Mucosa of descending colon (tissue), 3 donors: ENCODE measurements at regions of chr2 and their contacts with region 1.

Region 1: DNA sequence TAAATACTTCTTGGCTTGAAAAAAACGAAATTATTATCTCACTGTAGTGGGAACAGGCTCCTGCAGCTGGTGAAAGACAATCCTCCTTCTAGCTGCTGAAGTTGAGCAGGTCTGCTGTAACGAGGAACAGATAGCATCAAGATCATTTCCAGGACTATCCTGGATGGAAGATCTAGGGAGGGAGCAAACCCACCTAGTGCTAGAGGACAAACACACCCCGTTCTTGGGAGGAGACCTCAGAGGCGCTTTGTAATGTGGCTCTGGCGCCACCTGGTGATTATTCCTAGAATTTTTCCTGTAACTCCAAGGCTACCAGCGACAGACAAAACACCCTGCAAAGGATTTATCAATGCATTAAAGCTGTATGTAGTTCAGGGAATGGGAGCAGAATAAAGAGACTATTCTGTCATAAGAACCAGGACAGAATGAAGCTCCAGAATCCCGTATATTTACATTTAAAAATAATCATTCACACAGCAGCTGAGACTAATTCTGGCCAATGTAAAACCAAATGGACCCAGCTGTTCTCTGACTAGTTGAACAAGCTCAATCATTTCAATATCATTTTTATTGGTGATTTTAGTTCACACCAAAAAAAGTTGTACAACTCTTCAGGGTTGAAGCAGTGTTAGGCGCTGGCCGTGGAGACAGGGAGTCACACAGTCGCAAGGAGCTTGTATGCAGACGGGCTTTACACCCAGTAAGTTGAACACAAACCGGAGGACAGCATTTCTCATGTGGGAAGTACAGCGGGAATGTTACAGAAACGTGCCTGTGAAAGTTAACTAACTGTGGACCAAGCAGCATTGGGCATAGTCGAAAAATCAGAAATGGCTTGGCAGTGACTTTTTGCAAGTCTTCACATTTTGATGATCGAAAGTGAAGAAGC is 290.3 kb downstream of the TRIB2 start:
- DNase-seq: peak in 2 of 3 donors; percentile 30 to 73
- ATAC-seq: peak; percentile 69
- H3K4me3 ChIP-seq: no peak overlapping the region
- H3K4me1 ChIP-seq: no peaks in the 10 kb centered on the region
- CTCF ChIP-seq: peak; percentile 68

Region 2: GRCh38 chr2:11829947-11830707 is 1176.9 kb before region 1 on chr2:
- intact Hi-C with region 1: loop called in 1 of 2 experiments (anchors 10 kb)
- DNase-seq: peak; percentile 47 to 68 (median 62)
- ATAC-seq: peak; percentile 89
- H3K4me3 ChIP-seq: no peak overlapping the region
- H3K4me1 ChIP-seq: peaks cover 18% of the 10 kb centered on the region
- CTCF ChIP-seq: no peak